PC-3 (cell line): ENCODE measurements at regions of chrX and their contacts with region 1.

Region 1: GRCh38 chrX:124211312-124211942 is 121.0 kb upstream of the TEX13D start:
- DNase-seq: peak; percentile 65
- ATAC-seq: peak; percentile 58
- H3K4me3 ChIP-seq: no peak overlapping the region
- H3K27ac ChIP-seq: no peak overlapping the region
- H3K4me1 ChIP-seq: peaks cover 23% of the 10 kb centered on the region
- H3K27me3 ChIP-seq: no peaks in the 10 kb centered on the region
- CTCF ChIP-seq: peak; percentile 73

Region 2: DNA sequence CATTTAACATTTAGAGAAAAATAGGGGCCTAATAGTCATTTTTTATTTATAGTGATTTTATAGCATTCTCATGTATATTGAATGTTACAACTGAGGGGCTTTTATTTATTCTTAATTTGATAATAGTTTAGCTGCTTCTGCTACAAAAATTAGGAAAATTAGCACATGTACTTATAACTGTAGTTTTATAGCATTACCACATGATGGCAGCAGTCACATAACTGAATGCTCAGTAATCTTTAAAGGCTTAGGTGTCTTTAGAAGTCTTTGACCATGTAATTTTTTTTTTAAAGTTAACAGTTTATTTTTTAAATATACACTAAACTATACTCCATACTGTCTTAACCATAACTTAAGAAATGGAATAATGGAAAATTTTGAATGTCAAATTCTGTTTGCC is 113.3 kb before region 1 on chrX:
- CTCF ChIA-PET with region 1: no interaction called
- POLR2A ChIA-PET with region 1: no interaction called
- intact Hi-C with region 1: loop called (anchors 5 kb)
- DNase-seq: peak; percentile 53
- ATAC-seq: peak; percentile 48; the same call in 1 of the 2 replicates
- H3K4me3 ChIP-seq: no peak overlapping the region
- H3K27ac ChIP-seq: no peak overlapping the region
- H3K4me1 ChIP-seq: no peaks in the 10 kb centered on the region
- H3K27me3 ChIP-seq: no peaks in the 10 kb centered on the region
- CTCF ChIP-seq: peak; percentile 68

Region 3: DNA sequence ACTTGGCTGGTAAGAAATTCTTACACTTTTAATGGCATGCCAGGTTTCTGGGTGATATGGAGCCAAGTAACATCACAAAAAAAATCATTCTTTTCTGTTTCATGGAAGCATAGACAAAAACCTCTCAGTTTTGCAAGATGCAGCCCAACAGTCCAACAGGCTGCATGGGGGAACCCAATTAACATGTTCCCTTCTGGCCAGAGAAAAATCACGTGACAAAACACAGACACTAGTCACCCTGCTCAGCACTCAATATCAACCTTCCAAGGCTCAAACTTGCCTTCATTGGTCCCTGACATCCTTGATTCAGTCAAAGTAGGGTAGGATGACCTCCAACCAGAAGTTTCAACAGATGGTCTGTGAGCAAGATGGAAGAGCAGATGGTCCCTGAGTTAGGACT is 48.2 kb before region 1 on chrX:
- CTCF ChIA-PET with region 1: no interaction called
- POLR2A ChIA-PET with region 1: no interaction called
- intact Hi-C with region 1: no loop called
- DNase-seq: no peak
- ATAC-seq: no peak
- H3K4me3 ChIP-seq: no peak overlapping the region
- H3K27ac ChIP-seq: no peak overlapping the region
- H3K4me1 ChIP-seq: no peaks in the 10 kb centered on the region
- H3K27me3 ChIP-seq: no peaks in the 10 kb centered on the region
- CTCF ChIP-seq: no peak

Region 4: DNA sequence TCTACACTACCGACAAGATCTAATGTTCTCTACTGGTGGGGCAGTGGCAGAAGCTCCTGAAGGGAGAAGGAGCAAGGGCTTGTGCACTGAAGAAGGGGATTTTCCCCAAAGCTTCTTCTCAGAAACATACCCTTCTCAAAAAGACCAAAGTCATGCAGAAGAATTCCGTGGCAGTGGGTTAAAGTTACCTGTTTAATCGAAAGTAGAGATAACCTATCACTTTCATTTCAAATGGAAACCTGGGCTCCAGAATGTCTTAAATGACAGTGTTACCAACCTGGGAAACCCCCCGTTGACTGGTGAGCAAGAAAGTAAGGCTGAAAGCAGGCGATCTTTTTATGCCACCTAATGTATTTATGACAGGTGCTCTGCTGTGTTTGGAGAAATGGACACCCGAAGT is 28.5 kb after region 1 on chrX:
- CTCF ChIA-PET with region 1: no interaction called
- POLR2A ChIA-PET with region 1: no interaction called
- intact Hi-C with region 1: loop called (anchors 1 kb)
- DNase-seq: no peak
- ATAC-seq: no peak
- H3K4me3 ChIP-seq: no peak overlapping the region
- H3K27ac ChIP-seq: no peak overlapping the region
- H3K4me1 ChIP-seq: peaks cover 10% of the 10 kb centered on the region
- H3K27me3 ChIP-seq: no peaks in the 10 kb centered on the region
- CTCF ChIP-seq: no peak

Region 5: DNA sequence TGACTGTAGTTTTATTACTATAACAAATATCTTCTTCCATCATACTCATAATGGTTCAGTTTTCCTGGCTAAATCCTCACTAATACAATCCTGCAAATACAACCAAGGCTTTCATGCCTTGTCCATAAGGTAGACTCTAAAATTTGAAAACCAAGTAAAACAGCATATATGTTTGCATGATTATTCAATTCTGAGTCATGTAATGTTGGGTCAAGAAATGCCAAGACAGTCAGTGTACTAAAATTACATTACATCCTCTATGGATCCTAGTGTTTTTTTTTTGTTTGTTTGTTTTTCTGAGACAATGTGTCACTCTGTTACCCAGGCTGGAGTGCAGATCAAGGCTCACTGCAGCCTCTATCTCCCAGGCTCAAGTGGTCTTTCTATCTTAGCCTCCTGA is 82.4 kb after region 1 on chrX:
- CTCF ChIA-PET with region 1: no interaction called
- POLR2A ChIA-PET with region 1: no interaction called
- intact Hi-C with region 1: loop called (anchors 5 kb)
- DNase-seq: peak; percentile 75
- ATAC-seq: peak; percentile 96
- H3K4me3 ChIP-seq: no peak overlapping the region
- H3K27ac ChIP-seq: peak overlapping the region; percentile 64
- H3K4me1 ChIP-seq: peaks cover 15% of the 10 kb centered on the region
- H3K27me3 ChIP-seq: no peaks in the 10 kb centered on the region
- CTCF ChIP-seq: no peak

Region 6: DNA sequence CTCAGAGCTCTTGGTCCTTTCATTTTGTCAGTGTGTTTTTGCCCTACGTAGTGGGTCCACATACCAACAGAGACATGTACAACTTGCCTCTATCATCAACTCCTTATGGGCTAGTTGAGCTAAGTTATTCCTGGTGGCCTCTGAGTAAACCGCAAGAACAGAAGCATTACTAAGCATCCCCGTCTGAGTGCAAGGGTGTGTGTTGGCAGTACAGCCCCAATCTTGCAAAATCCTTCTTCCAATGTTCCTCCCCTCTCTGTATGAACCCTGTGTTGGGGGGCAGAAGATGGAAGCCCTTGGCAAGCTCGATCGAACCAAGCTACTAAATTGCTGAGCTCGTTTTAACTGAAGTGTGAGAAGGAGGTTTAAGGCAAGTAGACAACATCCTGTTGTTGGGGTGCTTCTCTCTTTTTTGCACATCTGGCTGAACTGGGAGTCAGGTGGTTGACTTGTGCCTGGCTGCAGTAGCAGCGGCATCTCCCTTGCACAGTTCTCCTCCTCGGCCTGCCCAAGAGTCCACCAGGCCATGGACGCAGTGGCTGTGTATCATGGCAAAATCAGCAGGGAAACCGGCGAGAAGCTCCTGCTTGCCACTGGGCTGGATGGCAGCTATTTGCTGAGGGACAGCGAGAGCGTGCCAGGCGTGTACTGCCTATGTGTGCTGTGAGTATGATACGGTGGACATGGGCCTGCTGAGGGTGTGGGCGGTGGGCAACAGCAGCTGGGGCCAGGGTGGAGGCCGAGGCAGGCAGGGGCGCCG is 134.9 kb after region 1 on chrX and contains the start of gene SH2D1A:
- CTCF ChIA-PET with region 1: no interaction called
- POLR2A ChIA-PET with region 1: no interaction called
- intact Hi-C with region 1: loop called (anchors 2 kb)
- DNase-seq: no peak
- ATAC-seq: no peak
- H3K4me3 ChIP-seq: no peak within 1 kb of the TSS
- H3K27ac ChIP-seq: no peak within 1 kb of the TSS
- H3K4me1 ChIP-seq: no peaks in the 10 kb centered on the region; the same call in 1 of the 2 replicates
- H3K27me3 ChIP-seq: no peaks in the 10 kb centered on the region
- CTCF ChIP-seq: no peak
- total RNA-seq, gene SH2D1A: 0.12 TPM in 1 of 2 replicates, not detected in the other

Region 7: DNA sequence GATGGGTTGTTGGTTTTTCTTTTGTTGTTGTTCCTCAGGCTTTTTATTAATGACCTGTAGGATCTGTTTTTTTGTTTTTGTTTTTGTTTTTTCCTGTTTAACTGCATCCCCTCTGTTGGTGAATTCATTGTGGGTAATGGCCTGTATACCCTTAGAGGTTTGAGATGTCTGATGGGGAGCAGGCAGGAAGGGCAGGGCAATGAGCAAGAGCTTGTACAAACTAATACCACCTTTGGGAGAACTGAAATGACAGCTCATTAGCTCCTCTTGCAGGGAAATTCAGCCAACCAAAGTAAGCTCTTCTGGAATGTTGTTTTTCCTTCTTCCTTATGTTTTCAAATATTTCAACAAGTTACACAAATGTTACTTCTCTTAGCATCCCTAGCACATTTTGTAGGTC is 158.3 kb after region 1 on chrX:
- CTCF ChIA-PET with region 1: no interaction called
- POLR2A ChIA-PET with region 1: no interaction called
- intact Hi-C with region 1: loop called (anchors 2 kb)
- DNase-seq: peak; percentile 7
- ATAC-seq: peak; percentile 85
- H3K4me3 ChIP-seq: no peak overlapping the region
- H3K27ac ChIP-seq: no peak overlapping the region
- H3K4me1 ChIP-seq: peaks cover 13% of the 10 kb centered on the region
- H3K27me3 ChIP-seq: no peaks in the 10 kb centered on the region
- CTCF ChIP-seq: no peak

Region 8: DNA sequence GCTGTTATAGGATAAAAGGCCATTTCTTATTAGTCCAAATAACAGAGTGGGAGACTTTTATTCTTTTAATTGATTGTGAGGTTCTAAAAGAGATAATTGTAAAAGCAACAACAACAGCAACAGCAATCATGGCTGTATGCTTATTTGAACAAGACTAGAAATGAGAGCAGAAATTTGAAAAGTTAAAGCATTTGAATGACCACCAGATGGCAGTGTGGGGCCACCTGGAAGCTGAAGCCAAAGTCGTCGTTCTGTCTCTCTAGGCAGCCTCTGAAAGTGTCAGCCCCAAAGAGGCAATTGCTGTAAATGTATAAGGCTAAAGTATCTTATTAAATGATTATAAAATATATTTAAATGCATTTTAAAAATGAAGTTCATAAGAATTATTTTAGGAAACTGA is 177.1 kb after region 1 on chrX:
- CTCF ChIA-PET with region 1: no interaction called
- POLR2A ChIA-PET with region 1: no interaction called
- intact Hi-C with region 1: loop called (anchors 5 kb)
- DNase-seq: peak; percentile 64
- ATAC-seq: peak; percentile 77
- H3K4me3 ChIP-seq: no peak overlapping the region
- H3K27ac ChIP-seq: no peak overlapping the region
- H3K4me1 ChIP-seq: peaks cover under 1% of the 10 kb centered on the region
- H3K27me3 ChIP-seq: no peaks in the 10 kb centered on the region
- CTCF ChIP-seq: peak; percentile 58